Activated CD4-positive, alpha-beta T cell treated with anti-CD3 and anti-CD28 coated beads for 36 hours (primary cell): ENCODE measurements at regions of chr19 and their contacts with region 1.

Region 1: GRCh38 chr19:14689598-14690503 is at the start of gene ZNF333:
- DNase-seq: peak; percentile 100
- ATAC-seq: peak; percentile 94
- H3K4me3 Mint-ChIP-seq: peak within 1 kb of the TSS; percentile 79
- H3K27ac Mint-ChIP-seq: peak within 1 kb of the TSS; percentile 95
- H3K4me1 Mint-ChIP-seq: peaks cover 17% of the 10 kb centered on the region
- H3K27me3 Mint-ChIP-seq: no peaks in the 10 kb centered on the region
- total RNA-seq, gene ZNF333: 11.7 to 12.7 TPM

Region 2: DNA sequence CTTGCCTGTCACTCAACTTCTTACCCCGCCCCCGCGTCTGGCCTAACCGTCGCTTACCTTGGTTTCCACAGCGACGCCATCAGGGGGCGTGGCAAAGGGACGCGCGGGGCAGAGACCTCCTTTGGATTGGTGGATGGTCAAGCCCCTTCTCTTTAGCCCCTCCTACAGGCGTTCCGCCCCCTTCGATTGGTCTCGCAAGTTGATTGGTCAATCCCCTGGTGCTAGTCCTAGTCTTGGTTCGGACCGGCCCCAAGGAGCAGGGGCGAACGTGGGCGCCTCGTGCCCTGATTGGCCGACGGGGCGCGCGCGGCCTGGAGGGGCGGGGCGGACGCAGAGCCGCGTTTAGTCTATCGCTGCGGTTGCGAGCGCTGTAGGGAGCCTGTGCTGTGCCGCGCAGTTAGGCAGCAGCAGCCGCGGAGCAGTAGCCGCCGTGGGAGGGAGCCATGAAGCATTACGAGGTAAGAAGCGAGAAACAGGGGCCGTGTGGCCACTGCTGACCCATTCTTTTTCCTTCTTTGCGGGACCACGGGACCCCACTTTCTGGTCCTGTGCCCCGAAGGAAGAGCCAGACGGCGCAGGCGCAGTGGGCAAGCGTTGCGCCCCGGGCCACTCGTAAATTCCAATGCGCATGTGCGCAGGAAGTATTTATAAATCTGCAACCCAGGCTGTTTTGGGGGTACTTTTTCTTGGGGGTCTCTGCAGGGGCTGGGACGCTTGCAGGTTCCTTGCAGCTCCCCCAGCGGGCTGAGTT is 160.4 kb before region 1 on chr19 and contains the start of gene TECR:
- CTCF ChIA-PET with region 1: interaction called, 3 read pairs
- POLR2A ChIA-PET with region 1: no interaction called
- intact Hi-C with region 1: loop called in 1 of 2 experiments (anchors 1 kb)
- DNase-seq: peak; percentile 100
- ATAC-seq: peak; percentile 98
- H3K4me3 Mint-ChIP-seq: peak within 1 kb of the TSS; percentile 83
- H3K27ac Mint-ChIP-seq: peak within 1 kb of the TSS; percentile 90
- H3K4me1 Mint-ChIP-seq: peaks cover 37% of the 10 kb centered on the region
- H3K27me3 Mint-ChIP-seq: no peaks in the 10 kb centered on the region
- total RNA-seq, gene TECR: 106 to 145 TPM

Region 3: DNA sequence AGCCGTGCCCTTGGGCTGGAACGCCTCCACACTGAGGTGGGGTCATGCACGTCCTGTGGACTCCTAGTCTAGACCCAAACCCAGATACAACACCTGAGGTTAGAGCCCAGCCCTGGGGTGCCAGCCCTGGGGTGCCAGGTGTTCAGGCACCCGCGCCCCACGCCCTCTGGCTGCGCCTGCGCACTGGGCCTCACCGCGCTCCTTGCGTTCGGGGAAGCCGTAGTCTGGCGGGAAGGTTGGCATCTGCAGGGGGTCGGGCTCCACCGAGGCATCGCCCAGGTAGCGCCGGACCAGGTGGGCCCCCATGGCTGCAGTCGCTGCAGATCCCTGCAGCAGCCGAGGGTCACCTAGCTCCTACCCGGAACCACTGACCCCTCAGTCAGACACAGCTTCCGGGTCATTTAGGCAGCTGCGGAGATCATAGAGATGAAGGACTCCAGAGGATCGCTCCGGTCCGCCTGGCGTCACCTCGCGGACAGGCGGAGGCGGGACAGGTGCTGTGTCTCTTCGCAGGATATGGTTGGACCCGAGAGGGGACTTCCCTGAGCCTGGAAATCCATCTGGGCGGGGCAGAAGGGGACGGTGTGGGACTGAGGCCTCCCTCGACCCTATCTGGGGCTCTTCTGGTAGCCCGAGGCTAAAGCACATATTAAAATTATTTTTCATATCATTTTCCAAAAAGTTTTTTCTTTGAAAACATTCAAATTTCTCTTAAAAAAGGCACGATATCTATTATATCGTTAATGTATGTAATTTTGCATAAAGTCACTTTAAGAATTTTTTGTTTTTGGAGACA is 118.0 kb before region 1 on chr19 and contains the start of gene NDUFB7:
- CTCF ChIA-PET with region 1: interaction called, 244 read pairs
- POLR2A ChIA-PET with region 1: interaction called, 11 read pairs
- intact Hi-C with region 1: loop called (anchors 1 kb)
- DNase-seq: peak; percentile 95
- ATAC-seq: peak; percentile 95
- H3K4me3 Mint-ChIP-seq: peak within 1 kb of the TSS; percentile 95
- H3K27ac Mint-ChIP-seq: peak within 1 kb of the TSS; percentile 92
- H3K4me1 Mint-ChIP-seq: peaks cover 36% of the 10 kb centered on the region
- H3K27me3 Mint-ChIP-seq: no peaks in the 10 kb centered on the region
- total RNA-seq, gene NDUFB7: 112 to 121 TPM

Region 4: GRCh38 chr19:14677464-14677863 is 12.4 kb before region 1 on chr19:
- CTCF ChIA-PET with region 1: interaction called, 20 read pairs
- POLR2A ChIA-PET with region 1: no interaction called
- intact Hi-C with region 1: no loop called
- DNase-seq: peak; percentile 62
- ATAC-seq: peak; percentile 89
- H3K4me3 Mint-ChIP-seq: no peak overlapping the region
- H3K27ac Mint-ChIP-seq: no peak overlapping the region
- H3K4me1 Mint-ChIP-seq: peaks cover 2% of the 10 kb centered on the region
- H3K27me3 Mint-ChIP-seq: peaks cover 21% of the 10 kb centered on the region

Region 5: DNA sequence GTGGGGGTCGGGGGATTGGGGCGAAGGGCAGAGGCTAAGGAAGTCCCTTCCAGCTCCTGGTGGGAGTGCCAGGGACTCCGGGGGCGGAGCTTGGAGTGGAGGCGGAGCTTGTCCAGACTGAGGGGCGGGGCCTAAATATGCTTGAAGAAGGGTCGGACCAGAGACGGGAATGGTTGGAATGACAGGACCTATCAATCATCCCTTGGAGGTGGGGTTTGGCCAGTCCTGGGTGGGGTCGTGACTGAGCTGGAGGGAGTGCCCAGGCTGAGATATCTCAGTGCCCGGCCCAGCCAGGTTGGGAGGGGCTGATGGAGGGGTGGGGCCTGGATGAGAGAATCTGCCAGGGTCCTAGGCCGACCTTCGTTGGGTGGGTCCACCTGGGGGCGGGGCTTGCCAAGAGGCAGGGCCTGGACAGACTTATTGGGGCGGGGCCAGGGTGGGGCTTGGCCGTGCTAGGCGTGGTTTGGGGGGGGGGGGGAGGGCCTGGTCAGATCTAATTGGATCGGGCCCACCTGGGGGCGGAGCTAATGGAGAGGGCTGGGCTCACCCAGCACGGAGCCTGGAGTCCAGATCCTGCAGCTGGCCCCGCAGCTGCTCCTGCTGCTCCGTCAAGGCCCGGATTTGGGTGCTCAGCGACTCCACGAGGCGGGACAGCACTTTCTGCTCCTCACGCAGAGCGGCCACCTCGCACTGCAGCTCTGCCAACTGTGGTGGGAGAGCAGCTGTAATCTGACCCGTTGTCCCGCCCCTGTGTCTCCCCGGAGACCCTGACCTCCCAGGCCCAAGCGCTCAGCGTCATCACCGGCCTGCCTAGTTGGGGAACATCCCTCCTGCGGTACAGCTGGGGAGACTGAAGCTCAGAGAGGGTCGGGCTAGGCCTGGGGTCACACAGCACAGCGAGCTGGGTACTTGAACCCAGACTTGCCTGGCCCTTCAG is 762.5 kb after region 1 on chr19:
- CTCF ChIA-PET with region 1: no interaction called
- POLR2A ChIA-PET with region 1: no interaction called
- intact Hi-C with region 1: no loop called
- DNase-seq: peak; percentile 49
- ATAC-seq: no peak
- H3K4me3 Mint-ChIP-seq: no peak overlapping the region
- H3K27ac Mint-ChIP-seq: no peak overlapping the region
- H3K4me1 Mint-ChIP-seq: peaks cover 17% of the 10 kb centered on the region
- H3K27me3 Mint-ChIP-seq: no peaks in the 10 kb centered on the region